ENCODE measurements at regions of chr11 and their contacts with region 1.

Region 1: GRCh38 chr11:73141848-73142286 is 251 bp downstream of the FCHSD2 start:
- DNase-seq: peak; percentile 88
- ATAC-seq: peak; percentile 58

Region 2: GRCh38 chr11:72831513-72832300 is 310.2 kb before region 1 on chr11:
- intact Hi-C with region 1: loop called (anchors 10 kb)
- DNase-seq: peak; percentile 90
- ATAC-seq: peak; percentile 75

Region 3: GRCh38 chr11:72885749-72886609 is 255.9 kb before region 1 on chr11:
- intact Hi-C with region 1: no loop called
- DNase-seq: no peak
- ATAC-seq: no peak

Region 4: DNA sequence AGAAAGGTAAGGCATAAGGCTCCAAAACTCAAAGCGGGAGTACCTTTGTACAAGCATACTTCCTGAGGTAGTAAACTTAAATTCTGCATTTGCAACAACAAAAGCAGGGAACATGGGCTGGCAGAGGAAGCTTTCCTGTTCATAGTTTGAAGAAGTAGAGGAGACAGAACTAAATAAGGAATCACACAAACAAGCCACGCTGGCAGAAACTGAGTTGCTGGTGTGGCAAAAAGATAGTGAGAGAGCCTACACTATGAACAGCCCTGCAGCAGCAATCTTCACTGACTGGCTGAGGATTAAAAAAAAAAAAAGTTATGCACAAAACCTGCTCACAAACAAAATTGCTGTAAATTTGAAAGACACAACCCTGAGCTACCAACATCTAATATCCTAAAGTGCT is 46.3 kb before region 1 on chr11:
- intact Hi-C with region 1: no loop called
- DNase-seq: no peak
- ATAC-seq: peak; percentile 86